ENCODE measurements at regions of chr22 and their contacts with region 1.

Region 1: GRCh38 chr22:30947816-30948454 is 20.6 kb downstream of the MORC2 start:
- DNase-seq: no peak
- H3K4me3 ChIP-seq: no peak overlapping the region
- CTCF ChIP-seq: no peak
- POLR2A ChIP-seq: no peak

Region 2: GRCh38 chr22:31084811-31085497 is 137.0 kb after region 1 on chr22:
- intact Hi-C with region 1: loop called (anchors 5 kb)
- DNase-seq: peak; percentile 81 to 98
- H3K4me3 ChIP-seq: peak overlapping the region; percentile 30
- CTCF ChIP-seq: peak in 1 of 3 donors; percentile 22
- POLR2A ChIP-seq: peak in 1 of 2 donors; percentile 7